ENCODE measurements at regions of chr4 and their contacts with region 1.

Region 1: DNA sequence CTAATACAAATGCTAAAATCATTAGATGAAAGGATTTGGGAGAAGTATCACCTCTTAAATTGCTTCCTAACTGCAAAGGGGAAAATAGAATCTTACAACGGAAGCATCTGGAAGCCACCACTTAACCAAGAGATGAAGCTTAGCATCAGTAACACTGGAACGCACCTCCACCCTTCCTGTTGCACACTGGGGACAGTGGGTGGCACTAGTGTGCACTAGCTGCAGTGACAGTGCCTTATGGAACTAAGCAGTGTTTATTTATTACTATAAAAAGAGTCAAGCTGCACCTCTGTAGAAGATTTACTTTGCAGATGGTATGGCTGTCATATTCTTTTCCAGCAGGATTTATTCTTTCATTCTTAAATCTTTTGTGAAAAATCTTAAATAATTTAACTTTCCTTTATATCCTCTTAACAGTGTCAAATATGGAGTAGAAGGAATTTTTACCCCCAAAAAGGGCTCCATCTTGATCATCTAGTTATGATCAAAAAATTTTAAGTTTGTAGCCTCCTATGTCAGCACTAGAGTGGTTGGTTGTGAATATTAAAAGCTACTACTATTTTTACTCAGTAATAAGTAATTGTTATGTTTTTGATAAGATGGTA is 76.7 kb downstream of the SCD5 start:
- DNase-seq: peak; percentile 64
- H3K4me3 ChIP-seq: no peak overlapping the region
- H3K27ac ChIP-seq: no peak overlapping the region
- H3K4me1 ChIP-seq: 0 out of 4 replicates have a peak, but pooled peaks cover 0 to 4% of the 10 kb centered on the region in 2 experiments
- H3K27me3 ChIP-seq: no peaks in the 10 kb centered on the region
- CTCF ChIP-seq: peak; percentile 69
- EP300 ChIP-seq: no peak
- RAD21 ChIP-seq: peak; percentile 87

Region 2: DNA sequence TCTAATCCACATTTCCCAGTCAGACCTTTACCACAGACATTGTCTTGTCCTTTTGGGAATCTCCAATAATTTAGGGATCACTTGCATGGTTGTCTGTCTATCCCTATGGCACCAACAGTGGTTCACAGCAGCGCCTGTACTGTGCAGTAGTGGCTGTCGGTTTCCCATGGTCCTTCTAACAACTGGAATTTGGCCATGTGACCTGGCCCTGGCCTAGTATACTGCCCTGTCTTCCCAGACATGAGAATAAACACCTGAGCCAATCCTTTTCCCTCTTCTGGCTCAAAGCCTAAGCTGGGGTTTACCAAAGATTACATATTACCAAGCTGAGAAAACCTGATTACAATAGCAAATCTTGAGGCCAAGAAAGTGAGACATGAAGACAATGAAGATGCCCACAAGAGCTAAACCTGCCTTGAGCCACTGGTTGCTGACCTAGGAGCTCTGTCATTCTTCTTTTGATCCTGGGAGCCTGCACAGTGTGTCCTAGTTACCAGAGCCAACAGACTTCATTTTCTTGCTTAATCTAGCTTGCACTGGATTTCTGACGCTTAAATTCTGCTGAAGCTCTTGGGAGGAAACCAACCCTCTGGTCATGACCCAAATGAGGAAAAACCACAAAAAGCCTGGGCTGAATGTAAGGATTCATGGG is 15.4 kb before region 1 on chr4:
- CTCF ChIA-PET with region 1: interaction called, 52 read pairs
- POLR2A ChIA-PET with region 1: no interaction called
- DNase-seq: no peak
- H3K4me3 ChIP-seq: no peak overlapping the region
- H3K27ac ChIP-seq: no peak overlapping the region
- H3K4me1 ChIP-seq: no peaks in the 10 kb centered on the region; a peak in 1 of 4 replicates
- H3K27me3 ChIP-seq: no peaks in the 10 kb centered on the region
- CTCF ChIP-seq: no peak
- EP300 ChIP-seq: no peak
- RAD21 ChIP-seq: no peak

Region 3: DNA sequence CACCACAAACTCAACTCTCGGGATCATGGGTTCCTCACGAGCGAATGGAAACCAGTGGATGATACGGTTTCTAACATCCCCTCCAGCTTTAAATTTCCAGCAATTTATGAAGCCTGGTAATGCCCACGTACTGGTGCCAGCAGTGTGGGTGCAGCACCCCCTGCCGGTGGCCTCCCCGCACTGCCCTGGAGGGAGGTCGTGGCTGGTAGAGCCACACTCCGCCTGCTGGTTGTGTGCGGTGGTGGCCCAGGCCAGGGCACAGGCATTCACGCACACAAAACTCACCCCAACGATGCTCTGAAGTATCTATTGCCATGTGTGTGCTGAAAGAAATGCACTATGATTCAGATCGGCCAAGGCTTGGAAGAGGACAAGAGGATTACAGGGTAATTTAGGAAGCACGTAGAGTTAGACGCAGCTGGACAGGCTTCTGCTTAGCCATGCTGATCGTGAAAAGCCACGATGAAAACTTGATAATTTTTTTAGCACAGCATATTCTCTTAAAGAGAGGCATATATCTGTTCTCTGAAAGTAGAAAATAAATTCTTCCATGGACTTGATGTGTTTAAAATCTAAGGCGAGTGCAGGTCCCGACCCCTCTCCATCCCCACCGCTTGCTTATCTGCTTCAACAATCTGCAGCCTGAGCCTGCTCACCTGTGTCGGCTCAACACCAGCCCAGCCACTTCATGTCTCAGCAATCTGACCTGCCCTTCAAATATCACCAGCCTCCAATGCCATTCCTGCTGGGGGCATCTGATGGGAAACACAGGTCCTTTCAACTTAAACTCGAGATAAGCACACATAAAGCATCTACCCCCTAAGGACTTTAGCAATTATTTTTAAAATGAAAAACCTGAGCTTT is 17.6 kb after region 1 on chr4:
- CTCF ChIA-PET with region 1: interaction called, 42 read pairs
- POLR2A ChIA-PET with region 1: no interaction called
- DNase-seq: peak; percentile 77
- H3K4me3 ChIP-seq: peak overlapping the region in 1 of 2 experiments; percentile 41; a peak in 1 of 4 replicates
- H3K27ac ChIP-seq: no peak overlapping the region
- H3K4me1 ChIP-seq: peaks cover 0 to 10% of the 10 kb centered on the region in 2 experiments; a peak in 2 of 4 replicates
- H3K27me3 ChIP-seq: no peaks in the 10 kb centered on the region
- CTCF ChIP-seq: peak; percentile 71
- EP300 ChIP-seq: no peak
- RAD21 ChIP-seq: peak; percentile 77

Region 4: GRCh38 chr4:82798168-82799005 is 76.5 kb after region 1 on chr4 and contains the start of gene SCD5:
- CTCF ChIA-PET with region 1: interaction called, 89 read pairs
- POLR2A ChIA-PET with region 1: interaction called, 3 read pairs
- DNase-seq: peak; percentile 86
- H3K4me3 ChIP-seq: peak within 1 kb of the TSS; percentile 80 to 82
- H3K27ac ChIP-seq: peak within 1 kb of the TSS in 1 of 2 experiments; percentile 57; a peak in 2 of 4 replicates
- H3K4me1 ChIP-seq: peaks cover 11 to 13% of the 10 kb centered on the region in 2 experiments; a peak in 1 of 4 replicates
- H3K27me3 ChIP-seq: no peaks in the 10 kb centered on the region
- CTCF ChIP-seq: no peak
- EP300 ChIP-seq: no peak
- RAD21 ChIP-seq: no peak
- polyA plus RNA-seq, gene SCD5: 23.7 and 28.0 TPM in 2 replicates